CD14-positive monocyte (primary cell): ENCODE measurements at regions of chr19 and their contacts with region 1.

Region 1: GRCh38 chr19:2977001-2977685 is at the start of gene TLE6:
- DNase-seq: peak; percentile 79 to 93 (median 91)
- H3K4me3 ChIP-seq: peak within 1 kb of the TSS; percentile 4 to 69 (median 40)
- H3K4me3 Mint-ChIP-seq: peak within 1 kb of the TSS; percentile 77 to 91
- H3K27ac ChIP-seq: no peak within 1 kb of the TSS
- H3K27ac Mint-ChIP-seq: peak within 1 kb of the TSS in 4 of 7 donors; percentile 70 to 91 (median 80)
- H3K4me1 ChIP-seq: peaks cover 38 to 42% of the 10 kb centered on the region in 2 donors
- H3K4me1 Mint-ChIP-seq: peaks cover 36% of the 10 kb centered on the region
- H3K27me3 ChIP-seq: peaks cover 0 to 7% of the 10 kb centered on the region in 2 donors
- H3K27me3 Mint-ChIP-seq: peaks cover 23 to 36% (median 32%) of the 10 kb centered on the region in 3 donors
- CTCF ChIP-seq: no peak
- polyA plus RNA-seq, gene TLE6: not detected

Region 2: DNA sequence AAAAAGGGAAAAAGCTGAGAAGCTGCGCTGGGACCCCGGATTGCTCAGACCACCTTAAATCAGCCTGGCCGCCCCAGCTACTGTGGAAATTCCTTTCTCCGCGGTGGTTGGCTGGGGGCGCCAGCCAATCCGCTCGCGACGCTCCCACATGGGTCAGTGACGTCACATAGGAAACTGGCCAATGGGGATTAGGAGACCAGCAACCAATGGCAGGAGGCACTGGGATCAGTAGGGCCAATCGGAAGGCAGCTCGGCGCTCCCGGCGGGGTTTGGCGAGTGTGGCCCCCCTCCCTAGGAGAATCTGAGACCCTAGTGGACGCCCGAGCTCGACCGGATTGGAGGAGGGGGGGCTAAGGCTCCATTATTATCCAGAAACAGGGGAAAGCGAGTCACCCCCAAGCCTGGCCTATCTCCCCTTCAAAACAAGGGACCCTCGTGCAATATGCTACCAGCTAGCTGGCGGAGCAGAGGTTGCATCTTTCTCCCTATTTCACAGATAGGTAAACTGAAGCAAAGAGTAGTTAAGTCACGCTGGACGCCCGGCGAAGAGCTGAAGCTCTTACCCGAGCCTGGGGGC is 58.5 kb after region 1 on chr19:
- intact Hi-C with region 1: loop called (anchors 5 to 10 kb)
- DNase-seq: peak; percentile 97 to 99 (median 97)
- H3K4me3 ChIP-seq: peak overlapping the region; percentile 53 to 80 (median 63)
- H3K4me3 Mint-ChIP-seq: peak overlapping the region; percentile 88 to 95
- H3K27ac ChIP-seq: peak overlapping the region; percentile 83
- H3K27ac Mint-ChIP-seq: peak overlapping the region; percentile 92 to 98 (median 95)
- H3K4me1 ChIP-seq: peaks cover 18 to 25% of the 10 kb centered on the region in 2 donors
- H3K4me1 Mint-ChIP-seq: peaks cover 15% of the 10 kb centered on the region
- H3K27me3 ChIP-seq: peaks cover 3 to 34% of the 10 kb centered on the region in 2 donors
- H3K27me3 Mint-ChIP-seq: peaks cover 35 to 60% (median 56%) of the 10 kb centered on the region in 3 donors
- CTCF ChIP-seq: no peak